Activated B cell treated with CpG ODN at 0.5 μM for 24 hours (primary cell): ENCODE measurements at regions of chr14 and their contacts with region 1.

Region 1: DNA sequence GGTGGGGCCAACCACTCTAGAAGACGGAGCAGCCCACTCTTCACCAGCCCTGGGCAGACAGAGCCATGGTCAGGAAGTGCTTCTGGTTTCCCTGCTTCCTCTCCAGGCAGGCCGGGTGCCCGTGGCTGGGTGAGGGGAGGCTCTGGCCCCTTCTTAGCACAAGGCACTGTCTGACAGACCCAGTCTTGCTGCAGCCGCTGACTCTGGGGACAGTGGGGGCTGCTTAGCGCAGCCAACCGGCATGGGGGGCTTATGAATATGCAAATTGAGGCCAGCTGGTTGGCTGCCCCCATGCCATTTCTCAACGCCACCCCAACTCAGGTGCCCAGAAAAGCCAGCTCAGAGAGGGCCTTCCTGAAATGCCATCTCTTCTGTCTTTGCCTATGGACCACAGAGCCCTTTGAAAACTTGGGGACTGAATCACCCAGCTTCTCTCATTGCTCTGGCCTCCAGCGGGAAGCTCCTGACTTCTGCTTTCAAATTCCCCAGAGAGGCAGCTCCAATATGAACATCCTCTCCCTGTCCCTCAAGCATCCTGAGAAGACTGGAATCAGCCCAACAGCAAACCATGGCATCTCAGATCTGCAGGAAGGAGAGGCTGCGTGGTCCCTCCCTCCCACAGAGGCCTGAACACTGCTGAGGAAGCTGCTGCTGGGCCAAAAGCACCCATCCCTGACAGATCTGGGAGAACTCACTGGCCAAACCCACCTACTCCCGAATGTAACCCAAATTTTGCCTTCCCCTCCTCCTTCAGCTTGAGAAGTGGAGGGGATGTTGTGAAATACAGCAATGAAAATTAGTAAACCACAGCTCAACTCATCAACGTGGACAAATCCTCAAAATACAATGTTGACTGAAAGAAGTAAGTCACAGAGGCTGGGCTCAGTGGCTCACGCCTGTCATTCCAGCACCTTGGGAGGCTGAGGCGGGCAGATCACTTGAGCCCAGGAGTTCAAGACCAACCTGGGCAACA is at the start of gene PROX2:
- DNase-seq: no peak
- ATAC-seq: peak; percentile 57
- H3K4me3 Mint-ChIP-seq: peak within 1 kb of the TSS; percentile 28
- H3K27ac Mint-ChIP-seq: no peak within 1 kb of the TSS
- H3K4me1 Mint-ChIP-seq: peaks cover 26% of the 10 kb centered on the region
- H3K27me3 Mint-ChIP-seq: no peaks in the 10 kb centered on the region
- CTCF ChIP-seq: no peak
- total RNA-seq, gene PROX2: 0.07 TPM in 1 of 2 replicates, not detected in the other

Region 2: GRCh38 chr14:73816393-73816816 is 1059.8 kb before region 1 on chr14:
- CTCF ChIA-PET with region 1: no interaction called
- POLR2A ChIA-PET with region 1: no interaction called
- intact Hi-C with region 1: no loop called
- DNase-seq: no peak
- ATAC-seq: no peak
- H3K4me3 Mint-ChIP-seq: no peak overlapping the region
- H3K27ac Mint-ChIP-seq: no peak overlapping the region
- H3K4me1 Mint-ChIP-seq: peaks cover 5% of the 10 kb centered on the region
- H3K27me3 Mint-ChIP-seq: peaks cover 4% of the 10 kb centered on the region
- CTCF ChIP-seq: no peak

Region 3: DNA sequence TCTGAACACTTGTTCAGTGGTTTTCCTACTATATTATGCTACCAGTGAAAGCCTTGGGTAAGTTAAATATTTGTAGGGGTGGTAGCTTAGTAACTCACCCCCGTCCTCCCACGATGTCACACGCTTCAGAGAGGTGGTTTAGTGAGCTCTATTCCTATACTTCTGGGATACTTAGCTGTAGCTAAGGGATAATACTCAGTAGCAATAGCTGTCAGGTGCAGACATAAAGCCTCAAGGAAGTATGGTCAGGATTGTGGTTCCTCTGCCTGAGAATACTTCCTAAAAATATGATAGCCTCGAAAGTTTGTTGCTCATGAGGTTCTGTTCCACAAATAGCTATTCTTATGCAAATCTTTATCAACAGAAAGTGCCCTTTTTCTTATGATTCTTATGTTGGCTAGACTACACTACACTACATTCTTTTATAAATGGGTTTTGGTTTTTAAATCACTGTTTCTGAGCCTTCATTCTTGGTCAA is 17.4 kb after region 1 on chr14:
- CTCF ChIA-PET with region 1: interaction called, 4 read pairs
- POLR2A ChIA-PET with region 1: interaction called, 9 read pairs
- intact Hi-C with region 1: loop called (anchors 2 kb)
- DNase-seq: no peak
- ATAC-seq: peak; percentile 43
- H3K4me3 Mint-ChIP-seq: peak overlapping the region; percentile 29
- H3K27ac Mint-ChIP-seq: peak overlapping the region; percentile 83
- H3K4me1 Mint-ChIP-seq: peaks cover 31% of the 10 kb centered on the region
- H3K27me3 Mint-ChIP-seq: no peaks in the 10 kb centered on the region
- CTCF ChIP-seq: no peak